Transverse colon (tissue), 4 donors: ENCODE measurements at regions of chrX and their contacts with region 1.

Region 1: DNA sequence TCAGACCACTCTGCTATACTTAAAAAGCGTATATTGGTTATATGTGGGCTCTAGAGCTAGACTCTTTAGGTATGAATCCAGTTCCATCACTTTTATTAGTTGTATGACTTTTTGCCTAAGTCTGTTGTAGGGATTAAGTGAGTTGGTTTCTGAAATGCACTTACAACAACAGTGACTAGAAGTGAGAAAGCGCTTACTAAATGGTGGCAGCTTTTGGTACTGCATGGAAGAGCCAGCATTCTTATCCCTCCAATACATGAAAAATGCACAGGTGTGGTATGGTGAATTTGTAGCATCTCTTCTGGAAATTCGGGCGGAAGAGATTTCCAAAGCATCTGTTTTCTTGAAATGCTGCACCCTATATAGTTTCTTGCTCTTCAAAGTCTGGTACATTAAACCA is 117.1 kb downstream of the SPANXA1 start:
- DNase-seq: no peak
- H3K4me3 ChIP-seq: no peak overlapping the region
- H3K27ac ChIP-seq: no peak overlapping the region
- H3K4me1 ChIP-seq: no peaks in the 10 kb centered on the region
- H3K27me3 ChIP-seq: no peaks in the 10 kb centered on the region
- CTCF ChIP-seq: no peak
- EP300 ChIP-seq: no peak
- POLR2A ChIP-seq: no peak

Region 2: GRCh38 chrX:141669689-141670088 is 202.2 kb after region 1 on chrX:
- in situ Hi-C with region 1: loop called in 1 of 4 experiments (anchors 25 kb)
- intact Hi-C with region 1: no loop called
- DNase-seq: no peak
- H3K4me3 ChIP-seq: no peak overlapping the region
- H3K27ac ChIP-seq: no peak overlapping the region
- H3K4me1 ChIP-seq: no peaks in the 10 kb centered on the region
- H3K27me3 ChIP-seq: no peaks in the 10 kb centered on the region
- CTCF ChIP-seq: no peak
- EP300 ChIP-seq: no peak
- POLR2A ChIP-seq: no peak